ENCODE measurements at regions of chr1 and their contacts with region 1.

Region 1: DNA sequence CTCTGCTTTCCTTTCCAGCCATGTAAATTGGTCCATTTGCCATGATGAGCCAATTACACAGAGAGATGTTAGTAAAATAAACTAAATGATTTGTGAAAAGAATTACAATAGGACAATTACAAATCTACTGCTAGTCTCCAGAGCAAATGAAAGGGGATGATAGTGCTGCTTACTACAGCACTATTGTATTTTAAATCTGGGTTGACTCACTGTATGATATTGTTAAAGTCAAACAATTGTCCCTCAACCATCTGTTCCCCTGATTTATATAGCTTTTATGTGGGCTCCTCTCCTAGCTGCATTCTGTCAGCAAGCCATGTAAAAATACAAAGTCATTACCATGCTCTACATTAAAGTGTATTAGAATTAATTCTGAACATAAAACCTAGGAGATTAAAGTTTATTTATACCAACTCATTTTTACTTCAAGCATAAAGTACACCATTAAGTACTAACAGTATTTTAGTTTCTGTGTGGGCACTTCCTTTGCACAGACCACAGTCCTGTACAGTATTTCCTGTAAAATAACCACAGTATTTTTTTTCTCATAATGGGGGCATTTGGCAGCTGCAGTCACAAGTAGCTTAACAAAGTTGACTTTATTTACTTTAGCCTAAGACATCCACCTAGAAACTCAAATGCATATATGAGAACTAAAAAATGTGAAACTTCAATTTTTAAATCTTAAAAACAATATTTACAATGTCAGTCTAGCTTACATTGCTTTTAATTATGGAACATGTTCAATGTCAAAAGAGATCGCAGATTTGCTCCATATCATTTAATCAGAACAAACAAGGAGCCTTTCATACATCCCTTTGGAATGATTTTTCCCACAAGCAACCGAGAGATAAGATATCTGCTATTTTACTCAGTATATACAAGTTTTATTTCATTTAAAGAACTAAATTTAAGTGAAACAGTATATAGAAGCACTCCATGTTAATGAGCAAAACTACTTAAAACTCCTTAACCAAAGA is 135.6 kb downstream of the VAV3 start:
- DNase-seq: no peak
- H3K4me3 ChIP-seq: no peak overlapping the region
- H3K27ac ChIP-seq: no peak overlapping the region
- H3K4me1 ChIP-seq: no peaks in the 10 kb centered on the region
- H3K27me3 ChIP-seq: no peaks in the 10 kb centered on the region
- CTCF ChIP-seq: no peak
- EP300 ChIP-seq: no peak
- POLR2A ChIP-seq: no peak

Region 2: GRCh38 chr1:107359472-107360241 is 469.7 kb before region 1 on chr1:
- intact Hi-C with region 1: loop called in 1 of 4 experiments (anchors 5 kb)
- DNase-seq: no peak
- H3K4me3 ChIP-seq: no peak overlapping the region
- H3K27ac ChIP-seq: no peak overlapping the region
- H3K4me1 ChIP-seq: no peaks in the 10 kb centered on the region
- H3K27me3 ChIP-seq: no peaks in the 10 kb centered on the region
- CTCF ChIP-seq: no peak
- EP300 ChIP-seq: no peak
- POLR2A ChIP-seq: no peak

Region 3: GRCh38 chr1:107535091-107535490 is 294.3 kb before region 1 on chr1:
- intact Hi-C with region 1: no loop called
- DNase-seq: no peak
- H3K4me3 ChIP-seq: no peak overlapping the region
- H3K27ac ChIP-seq: no peak overlapping the region
- H3K4me1 ChIP-seq: no peaks in the 10 kb centered on the region
- H3K27me3 ChIP-seq: no peaks in the 10 kb centered on the region
- CTCF ChIP-seq: no peak
- EP300 ChIP-seq: no peak
- POLR2A ChIP-seq: no peak

Measured in ovary (tissue), 10 donors.